Uterus (tissue), 4 donors: ENCODE measurements at regions of chr20 and their contacts with region 1.

Region 1: GRCh38 chr20:50790651-50791277 is 4.1 kb upstream of the BCAS4 start:
- DNase-seq: peak; percentile 85 to 93
- H3K4me3 ChIP-seq: no peak overlapping the region
- H3K27ac ChIP-seq: peak overlapping the region; percentile 89 to 94
- H3K4me1 ChIP-seq: peaks cover 6 to 9% of the 10 kb centered on the region in 2 donors
- H3K27me3 ChIP-seq: no peaks in the 10 kb centered on the region
- CTCF ChIP-seq: peak; percentile 80 to 90 (median 83)
- POLR2A ChIP-seq: peak in 1 of 2 donors; percentile 28

Region 2: DNA sequence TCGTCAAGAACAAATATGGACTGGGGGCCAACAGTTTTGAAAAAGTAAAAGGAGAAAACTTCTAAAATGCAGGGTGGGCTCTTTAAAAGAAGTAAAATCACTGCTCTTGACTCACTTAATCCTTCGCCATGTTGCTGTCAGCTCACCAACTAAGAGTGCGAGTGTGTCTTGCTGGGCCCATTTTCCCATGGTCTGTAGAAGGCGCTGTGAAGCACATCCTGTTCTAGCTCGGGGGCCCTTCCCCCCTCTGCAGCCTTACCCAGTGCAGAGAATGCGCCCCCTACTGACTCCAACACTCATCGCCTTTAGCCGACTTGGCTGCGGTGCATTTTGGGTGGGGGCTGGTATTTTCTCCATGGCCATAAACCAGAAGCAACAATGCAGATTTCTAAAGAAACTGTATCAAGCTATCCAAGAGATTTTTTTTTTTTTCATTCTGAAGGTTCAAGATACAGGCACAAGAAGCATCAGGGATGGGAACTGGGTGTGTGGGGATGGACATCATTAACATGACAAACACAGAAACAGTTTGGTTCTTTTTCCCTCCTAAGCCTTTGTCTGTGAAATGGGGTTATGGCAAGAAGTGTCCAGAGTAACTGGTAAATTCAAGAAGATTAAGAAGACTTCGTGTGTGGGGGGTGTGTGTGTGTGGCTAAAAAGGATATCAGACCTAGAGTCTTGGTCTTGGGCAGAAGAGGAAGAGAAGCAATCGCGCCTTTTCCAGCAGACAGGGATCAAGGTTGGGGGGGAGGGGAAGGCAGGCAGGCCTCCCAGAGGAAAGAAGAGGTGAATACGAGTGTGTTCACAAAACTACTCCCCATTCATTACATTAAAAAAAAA is 138.8 kb after region 1 on chr20:
- intact Hi-C with region 1: loop called (anchors 10 kb)
- DNase-seq: peak; percentile 82 to 86
- H3K4me3 ChIP-seq: peak overlapping the region; percentile 88 to 98
- H3K27ac ChIP-seq: peak overlapping the region; percentile 81 to 99
- H3K4me1 ChIP-seq: peaks cover 7 to 11% of the 10 kb centered on the region in 2 donors
- H3K27me3 ChIP-seq: no peaks in the 10 kb centered on the region
- CTCF ChIP-seq: peak; percentile 66 to 79 (median 74)
- POLR2A ChIP-seq: no peak

Region 3: GRCh38 chr20:51345601-51346101 is 554.9 kb after region 1 on chr20:
- intact Hi-C with region 1: no loop called
- DNase-seq: no peak
- H3K4me3 ChIP-seq: no peak overlapping the region
- H3K27ac ChIP-seq: no peak overlapping the region
- H3K4me1 ChIP-seq: no peaks in the 10 kb centered on the region
- H3K27me3 ChIP-seq: no peaks in the 10 kb centered on the region
- CTCF ChIP-seq: no peak
- POLR2A ChIP-seq: no peak